ENCODE measurements at regions of chr16 and their contacts with region 1.

Region 1: DNA sequence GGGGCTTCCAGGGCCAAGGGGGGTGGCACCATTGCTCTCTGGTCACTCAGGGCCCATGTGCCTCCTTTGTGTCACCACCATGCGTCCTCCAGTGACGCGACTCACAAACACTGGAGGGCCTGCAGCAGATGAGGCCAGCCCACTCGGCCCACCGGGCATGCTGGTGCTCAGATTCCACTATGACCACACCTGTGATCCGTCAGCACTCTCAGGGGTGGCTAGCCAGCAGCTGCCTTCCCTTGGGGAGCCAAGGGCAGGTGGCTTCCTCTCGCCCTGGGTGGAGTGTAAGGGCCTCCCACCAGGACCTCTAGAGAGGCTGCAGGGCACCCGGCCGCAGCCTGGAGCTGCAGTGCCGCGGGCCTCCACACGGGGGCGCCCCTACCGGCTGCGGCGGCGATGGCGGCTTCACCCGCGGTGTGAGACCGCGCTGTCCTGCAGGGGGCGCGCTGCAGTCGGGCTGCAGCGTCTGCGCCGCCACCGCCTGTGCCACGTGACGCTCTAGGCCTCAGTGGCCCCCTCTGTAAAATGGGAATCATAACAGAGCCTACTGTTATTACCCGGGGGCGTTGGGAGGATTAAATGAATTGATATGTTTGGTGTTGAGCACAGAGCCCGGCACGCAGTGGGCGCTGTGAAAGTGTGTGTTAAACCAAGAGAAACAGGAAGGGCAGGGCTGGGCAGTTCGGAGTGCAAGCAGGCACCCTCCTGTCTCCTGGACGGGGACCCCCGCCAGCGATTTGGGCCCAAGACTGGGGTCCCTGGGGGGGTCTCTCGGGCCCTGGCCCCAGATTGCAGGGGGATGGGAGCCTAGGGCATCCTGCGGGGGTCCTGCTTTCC is 192.4 kb upstream of the GSE1 start:
- DNase-seq: peak; percentile 71 to 86 (median 84)
- H3K4me3 ChIP-seq: no peak overlapping the region
- H3K27ac ChIP-seq: no peak overlapping the region
- H3K4me1 ChIP-seq: peaks cover 0 to 42% (median 35%) of the 10 kb centered on the region in 4 experiments
- H3K27me3 ChIP-seq: no peaks in the 10 kb centered on the region

Region 2: DNA sequence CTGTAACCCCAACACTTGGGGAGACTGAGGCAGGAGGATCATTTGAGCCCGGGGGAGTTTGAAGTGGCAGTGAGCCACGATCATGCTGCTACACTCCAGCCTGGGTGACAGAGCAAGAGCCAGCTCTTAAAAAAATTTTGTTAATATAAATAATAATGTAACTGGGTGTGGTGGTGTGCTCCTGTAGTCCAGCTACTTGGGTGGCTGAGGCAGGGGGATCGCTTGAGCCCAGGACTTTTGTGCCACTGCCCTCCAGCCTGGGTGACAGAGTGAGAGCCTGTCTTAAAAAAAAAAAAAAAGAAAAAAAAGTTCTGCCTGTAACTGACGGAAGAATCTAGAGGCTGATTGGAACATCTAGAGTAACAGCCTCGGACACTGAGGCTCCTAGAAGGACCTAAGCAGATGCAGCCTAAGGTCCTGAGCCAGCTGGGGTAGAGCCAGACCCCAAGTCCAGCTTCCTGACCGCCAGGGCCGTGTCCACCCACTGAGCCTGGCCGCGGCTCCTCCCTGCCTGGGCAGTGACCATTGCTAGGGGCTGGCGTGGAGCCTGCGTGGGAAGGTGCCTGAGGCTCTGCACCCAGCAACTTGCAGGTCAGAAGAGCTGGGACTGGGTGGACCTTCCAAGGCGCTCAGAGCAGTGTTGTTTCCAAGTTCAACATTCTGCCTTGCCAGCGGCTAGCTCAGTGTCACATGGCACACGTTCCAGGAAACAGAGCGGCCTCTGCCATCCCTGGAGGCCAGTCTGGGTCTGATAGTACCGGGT is 99.0 kb before region 1 on chr16:
- CTCF ChIA-PET with region 1: no interaction called
- POLR2A ChIA-PET with region 1: no interaction called
- DNase-seq: no peak
- H3K4me3 ChIP-seq: no peak overlapping the region
- H3K27ac ChIP-seq: no peak overlapping the region
- H3K4me1 ChIP-seq: peaks cover 0 to 37% (median 18%) of the 10 kb centered on the region in 4 experiments
- H3K27me3 ChIP-seq: no peaks in the 10 kb centered on the region

Region 3: DNA sequence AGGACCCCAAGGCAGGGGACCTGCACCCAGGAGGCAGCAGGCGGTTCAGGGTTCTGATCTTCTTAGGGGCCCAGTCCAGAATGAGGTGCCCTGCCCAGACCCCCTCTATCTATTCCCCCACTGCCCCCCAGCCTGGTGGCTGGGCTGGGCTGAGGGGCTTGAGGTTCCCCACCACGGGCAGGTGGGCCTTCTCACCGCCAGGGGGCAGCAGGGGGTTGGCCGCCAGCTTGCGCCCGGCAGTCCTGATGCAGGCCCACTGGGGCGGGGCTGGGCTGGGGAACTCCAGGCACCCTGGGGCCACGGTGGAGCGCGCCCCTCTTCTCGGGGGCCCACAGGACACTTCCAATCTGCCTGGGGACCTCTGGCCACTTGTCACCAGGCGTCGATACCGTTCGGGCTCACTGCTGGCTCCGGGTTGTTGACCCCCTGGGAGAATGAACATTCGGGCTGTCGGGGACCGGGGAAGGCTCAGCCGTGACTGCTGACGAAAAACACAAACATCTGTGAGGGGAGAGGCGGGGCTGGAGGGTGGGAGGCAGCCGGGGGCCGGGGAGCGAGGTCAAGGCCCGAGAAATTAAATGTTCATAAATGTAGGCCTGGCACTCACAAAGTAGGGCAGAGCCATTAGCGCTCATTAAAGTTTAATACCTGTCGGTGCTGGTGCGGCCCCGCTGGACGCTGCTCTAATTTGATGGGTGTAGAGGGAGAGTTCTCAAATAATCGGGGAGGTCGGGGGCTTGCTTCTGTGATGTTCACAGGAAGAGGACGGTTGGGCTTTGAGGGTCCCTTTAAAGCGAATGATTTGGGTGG is 26.8 kb before region 1 on chr16:
- CTCF ChIA-PET with region 1: interaction called, 12 read pairs
- POLR2A ChIA-PET with region 1: no interaction called
- DNase-seq: peak; percentile 61 to 78 (median 73)
- H3K4me3 ChIP-seq: no peak overlapping the region
- H3K27ac ChIP-seq: no peak overlapping the region
- H3K4me1 ChIP-seq: peaks cover 0 to 33% (median 28%) of the 10 kb centered on the region in 4 experiments
- H3K27me3 ChIP-seq: no peaks in the 10 kb centered on the region

Region 4: DNA sequence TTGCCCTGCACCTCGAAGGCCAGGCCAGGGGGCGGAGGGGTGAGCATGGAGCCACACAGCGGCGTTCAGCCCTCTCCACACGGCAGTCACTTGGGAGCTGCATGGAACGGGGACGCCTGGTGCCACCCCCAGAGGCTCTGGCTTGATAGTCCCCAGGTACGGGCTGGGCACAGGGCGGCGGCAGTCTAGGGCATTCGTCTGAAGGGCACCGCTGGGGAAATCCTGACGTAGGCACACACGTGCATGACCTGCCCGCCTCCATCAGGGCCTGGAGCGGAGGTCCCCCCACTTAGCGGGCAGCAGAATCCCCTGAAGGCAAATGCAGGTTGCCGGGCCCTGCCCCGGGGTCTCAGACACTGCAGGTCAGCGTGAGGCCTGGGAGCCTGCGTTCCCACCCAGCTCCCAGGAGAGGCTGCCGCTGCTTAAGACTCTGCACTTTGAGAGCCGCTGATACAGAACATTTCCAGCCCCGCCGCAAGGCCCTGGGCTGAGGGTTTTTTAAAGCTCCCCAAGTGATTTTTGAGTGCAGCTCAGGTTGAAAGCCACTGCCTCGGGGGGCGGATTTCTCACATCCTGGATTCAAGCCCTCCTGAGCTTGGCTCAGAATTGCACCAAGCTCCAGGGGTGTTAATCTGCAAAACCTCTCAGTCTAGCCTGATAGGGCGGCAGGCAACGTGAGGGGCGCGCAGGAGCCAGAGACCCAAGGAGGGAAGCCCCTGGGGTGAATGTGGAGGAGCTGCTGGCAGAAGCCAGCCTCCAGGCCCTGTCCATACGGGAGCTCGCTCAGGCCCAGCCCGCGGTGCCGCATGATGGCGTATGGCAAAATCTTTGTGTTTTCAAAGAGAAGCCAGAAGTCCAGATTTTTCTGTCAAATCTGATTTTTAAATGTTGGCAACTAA is 10.1 kb after region 1 on chr16:
- CTCF ChIA-PET with region 1: interaction called, 16 read pairs
- POLR2A ChIA-PET with region 1: no interaction called
- DNase-seq: no peak
- H3K4me3 ChIP-seq: no peak overlapping the region
- H3K27ac ChIP-seq: no peak overlapping the region
- H3K4me1 ChIP-seq: peaks cover 0 to 8% (median 2%) of the 10 kb centered on the region in 4 experiments
- H3K27me3 ChIP-seq: peaks cover 0 to 1% (median 0%) of the 10 kb centered on the region in 5 experiments

Region 5: GRCh38 chr16:85461814-85462713 is 41.3 kb after region 1 on chr16:
- CTCF ChIA-PET with region 1: interaction called, 15 read pairs
- POLR2A ChIA-PET with region 1: no interaction called
- DNase-seq: peak; percentile 53 to 87 (median 81)
- H3K4me3 ChIP-seq: peak overlapping the region in 6 of 7 experiments; percentile 29 to 65 (median 50)
- H3K27ac ChIP-seq: peak overlapping the region in 1 of 2 experiments; percentile 49
- H3K4me1 ChIP-seq: peaks cover 0 to 40% (median 38%) of the 10 kb centered on the region in 4 experiments
- H3K27me3 ChIP-seq: peaks cover 0 to 3% (median 0%) of the 10 kb centered on the region in 5 experiments

Region 6: GRCh38 chr16:85536073-85536410 is 115.3 kb after region 1 on chr16:
- CTCF ChIA-PET with region 1: interaction called, 11 read pairs
- POLR2A ChIA-PET with region 1: no interaction called
- DNase-seq: peak; percentile 51 to 78 (median 67)
- H3K4me3 ChIP-seq: peak overlapping the region in 4 of 7 experiments; percentile 30 to 59 (median 56)
- H3K27ac ChIP-seq: peak overlapping the region; percentile 6 to 90
- H3K4me1 ChIP-seq: peaks cover 4 to 48% (median 46%) of the 10 kb centered on the region in 4 experiments
- H3K27me3 ChIP-seq: no peaks in the 10 kb centered on the region

Region 7: GRCh38 chr16:85615852-85616606 is 195.3 kb after region 1 on chr16:
- CTCF ChIA-PET with region 1: interaction called, 29 read pairs
- POLR2A ChIA-PET with region 1: interaction called, 3 read pairs
- DNase-seq: peak; percentile 95 to 98 (median 98)
- H3K4me3 ChIP-seq: peak overlapping the region; percentile 34 to 85 (median 74)
- H3K27ac ChIP-seq: peak overlapping the region; percentile 42 to 87
- H3K4me1 ChIP-seq: peaks cover 5 to 64% (median 50%) of the 10 kb centered on the region in 4 experiments
- H3K27me3 ChIP-seq: no peaks in the 10 kb centered on the region